B cell (primary cell): ENCODE measurements at regions of chr20 and their contacts with region 1.

Region 1: GRCh38 chr20:62937366-62938104 is 412 bp upstream of the GID8 start:
- DNase-seq: peak; percentile 97
- ATAC-seq: peak; percentile 90
- H3K4me3 ChIP-seq: peak overlapping the region; percentile 53 to 100 (median 81)
- H3K4me3 Mint-ChIP-seq: peak overlapping the region; percentile 89
- H3K27ac ChIP-seq: peak overlapping the region; percentile 91 to 93
- H3K27ac Mint-ChIP-seq: peak overlapping the region; percentile 92
- H3K4me1 ChIP-seq: peaks cover 26 to 42% of the 10 kb centered on the region in 2 donors
- H3K4me1 Mint-ChIP-seq: peaks cover 36% of the 10 kb centered on the region
- H3K27me3 ChIP-seq: no peaks in the 10 kb centered on the region
- H3K27me3 Mint-ChIP-seq: no peaks in the 10 kb centered on the region
- CTCF ChIP-seq: no peak

Region 2: DNA sequence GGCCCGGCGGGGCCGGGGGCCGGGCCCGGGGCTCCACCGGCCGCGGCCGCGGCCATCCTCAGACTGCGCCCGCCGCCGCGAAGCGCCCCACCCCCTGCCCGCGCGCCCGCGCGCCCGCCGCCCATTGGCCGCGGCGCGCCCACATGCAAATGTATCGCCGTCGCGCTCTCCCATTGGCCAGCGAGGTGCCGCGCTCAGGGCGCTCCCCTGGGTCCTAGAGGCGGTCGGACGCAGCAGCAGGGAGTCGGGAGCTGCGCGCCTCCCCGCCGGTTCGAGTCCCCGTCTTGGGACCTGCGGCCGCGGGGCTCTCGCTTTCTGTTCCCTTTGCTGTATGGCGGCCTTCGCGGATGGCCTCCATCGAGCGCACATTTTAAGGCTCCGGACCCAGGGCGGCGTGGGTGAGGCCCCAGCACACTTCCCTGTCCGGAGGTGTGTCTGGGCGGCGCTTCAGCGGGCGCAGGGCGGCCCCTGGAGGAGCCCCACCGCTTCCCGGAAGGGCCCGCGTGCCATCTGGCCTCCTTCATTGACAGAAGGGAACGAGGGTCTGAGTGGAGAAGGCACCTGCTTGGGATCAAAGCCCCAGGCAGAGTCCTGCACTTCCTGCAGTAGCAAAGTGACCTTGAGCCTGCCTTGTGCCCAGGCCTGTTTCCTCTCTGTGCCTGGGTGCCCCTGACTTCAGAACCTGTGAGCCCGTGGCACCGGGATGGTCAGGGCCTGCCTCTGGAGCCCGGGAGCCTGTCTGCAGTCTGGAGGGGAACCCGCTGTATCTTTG is 530.1 kb before region 1 on chr20 and contains the start of gene CABLES2:
- CTCF ChIA-PET with region 1: no interaction called
- POLR2A ChIA-PET with region 1: no interaction called
- intact Hi-C with region 1: loop called (anchors 5 kb)
- DNase-seq: peak; percentile 95
- ATAC-seq: peak; percentile 90
- H3K4me3 ChIP-seq: peak within 1 kb of the TSS; percentile 36 to 71 (median 67)
- H3K4me3 Mint-ChIP-seq: peak within 1 kb of the TSS; percentile 90
- H3K27ac ChIP-seq: peak within 1 kb of the TSS; percentile 59 to 66
- H3K27ac Mint-ChIP-seq: peak within 1 kb of the TSS; percentile 87
- H3K4me1 ChIP-seq: peaks cover 30 to 41% of the 10 kb centered on the region in 2 donors
- H3K4me1 Mint-ChIP-seq: peaks cover 30% of the 10 kb centered on the region
- H3K27me3 ChIP-seq: no peaks in the 10 kb centered on the region
- H3K27me3 Mint-ChIP-seq: no peaks in the 10 kb centered on the region
- CTCF ChIP-seq: no peak
- total RNA-seq, gene CABLES2: 8.2 and 8.6 TPM in 2 replicates